AG04449 (cell line): ENCODE measurements at regions of chr5 and their contacts with region 1.

Region 1: GRCh38 chr5:118791926-118792734 is 196.2 kb downstream of the DTWD2 start:
- DNase-seq: peak; percentile 44
- H3K4me3 ChIP-seq: no peak overlapping the region
- CTCF ChIP-seq: peak; percentile 65

Region 2: GRCh38 chr5:118775799-118776499 is 16.2 kb before region 1 on chr5:
- CTCF ChIA-PET with region 1: interaction called, 12 read pairs
- POLR2A ChIA-PET with region 1: no interaction called
- DNase-seq: no peak
- H3K4me3 ChIP-seq: no peak overlapping the region
- CTCF ChIP-seq: no peak